Pancreas (tissue), 10 donors: ENCODE measurements at regions of chr4 and their contacts with region 1.

Region 1: DNA sequence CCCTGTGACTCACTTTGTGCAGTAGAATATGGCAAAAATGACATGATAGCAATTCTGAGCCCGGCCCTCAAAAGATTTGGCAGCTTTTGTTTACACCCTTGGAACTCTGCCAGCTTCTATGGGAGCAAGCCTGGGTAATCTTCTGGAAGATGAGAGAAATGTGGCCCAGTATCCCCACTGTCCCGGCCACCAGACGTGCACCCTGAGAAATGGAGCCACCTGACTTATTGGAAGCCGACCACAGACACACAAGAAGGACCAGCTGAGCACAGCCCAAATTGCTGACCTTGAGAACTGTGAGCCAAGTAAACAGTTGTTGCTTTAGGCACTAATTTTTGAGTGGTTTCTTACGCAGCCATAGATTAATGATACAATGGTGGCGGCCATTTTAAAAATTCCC is 197.0 kb downstream of the STIM2 start:
- DNase-seq: no peak
- ATAC-seq: no peak
- H3K4me3 ChIP-seq: no peak overlapping the region
- H3K27ac ChIP-seq: no peak overlapping the region
- H3K4me1 ChIP-seq: no peaks in the 10 kb centered on the region
- H3K27me3 ChIP-seq: no peaks in the 10 kb centered on the region
- CTCF ChIP-seq: no peak

Region 2: GRCh38 chr4:27327421-27328181 is 269.9 kb after region 1 on chr4:
- intact Hi-C with region 1: loop called in 1 of 3 experiments (anchors 10 kb)
- DNase-seq: no peak
- ATAC-seq: no peak
- H3K4me3 ChIP-seq: no peak overlapping the region
- H3K27ac ChIP-seq: no peak overlapping the region
- H3K4me1 ChIP-seq: no peaks in the 10 kb centered on the region
- H3K27me3 ChIP-seq: no peaks in the 10 kb centered on the region
- CTCF ChIP-seq: no peak